Activated T-helper 2 cell treated with anti-CD3 and anti-CD28 coated beads, Interferon-gamma antibody, Interleukin-2, Interleukin-4, amounts not matched to agents 10 μg/mL and 5 μg/mL and 100 μg/mL, durations not matched to agents 14 hours and 24 hours and 36 hours (primary cell): ENCODE measurements at regions of chr7 and their contacts with region 1.

Region 1: GRCh38 chr7:24819916-24820689 is 62.8 kb upstream of the GSDME start:
- DNase-seq: peak; percentile 71
- H3K4me3 Mint-ChIP-seq: peak overlapping the region; percentile 69
- H3K27ac Mint-ChIP-seq: peak overlapping the region; percentile 97
- H3K4me1 Mint-ChIP-seq: peaks cover 43% of the 10 kb centered on the region
- H3K27me3 Mint-ChIP-seq: no peaks in the 10 kb centered on the region

Region 2: DNA sequence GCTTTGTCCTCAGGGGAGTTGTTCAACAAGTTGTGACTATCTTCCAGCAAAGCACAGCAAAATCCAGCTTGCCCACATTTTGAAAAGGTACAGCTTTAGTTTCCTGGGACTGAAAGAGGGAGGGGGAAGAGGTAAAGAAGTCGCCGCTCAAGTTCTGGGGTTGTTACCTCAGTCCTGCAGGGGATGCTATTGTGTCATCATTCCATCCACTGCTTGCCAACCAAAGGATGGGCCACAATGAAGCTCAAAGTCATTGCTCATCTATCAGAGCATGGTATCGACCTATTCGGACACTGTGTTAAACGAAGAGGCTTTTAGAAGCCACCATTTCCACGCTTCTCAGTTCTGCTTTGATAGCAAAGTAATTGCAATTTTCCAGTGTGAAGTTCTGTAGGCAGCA is 501.8 kb before region 1 on chr7:
- intact Hi-C with region 1: no loop called
- DNase-seq: no peak
- H3K4me3 Mint-ChIP-seq: no peak overlapping the region
- H3K27ac Mint-ChIP-seq: no peak overlapping the region
- H3K4me1 Mint-ChIP-seq: no peaks in the 10 kb centered on the region
- H3K27me3 Mint-ChIP-seq: peaks cover 19% of the 10 kb centered on the region

Region 3: DNA sequence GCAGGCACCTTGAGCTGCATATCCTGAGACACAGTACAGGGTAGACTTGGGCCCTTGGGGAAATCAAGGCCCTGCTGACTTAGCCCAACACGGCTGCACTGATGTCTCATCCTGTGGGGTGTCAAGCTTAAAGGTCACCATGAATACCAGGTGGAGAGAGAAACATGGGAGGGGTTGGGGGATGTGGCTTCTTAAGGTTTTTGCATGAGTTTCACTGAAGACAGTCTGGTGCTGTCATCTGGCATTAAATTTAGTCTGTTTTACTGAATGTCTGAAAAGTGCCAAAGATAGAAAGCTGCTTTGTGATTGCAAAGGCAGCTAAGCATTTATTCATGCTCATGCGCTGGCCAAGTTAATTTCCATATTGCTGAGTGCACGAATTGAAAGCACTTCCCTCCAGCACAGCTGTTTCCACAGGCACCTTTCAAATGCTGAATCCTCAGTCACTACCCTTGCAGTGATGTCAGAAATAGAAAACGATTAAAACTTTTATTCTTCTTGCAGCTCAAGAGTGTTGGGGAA is 57.7 kb after region 1 on chr7:
- intact Hi-C with region 1: loop called (anchors 1 kb)
- DNase-seq: peak; percentile 16
- H3K4me3 Mint-ChIP-seq: peak overlapping the region; percentile 49
- H3K27ac Mint-ChIP-seq: peak overlapping the region; percentile 69
- H3K4me1 Mint-ChIP-seq: peaks cover 56% of the 10 kb centered on the region
- H3K27me3 Mint-ChIP-seq: no peaks in the 10 kb centered on the region

Region 4: GRCh38 chr7:24965831-24966709 is 146.0 kb after region 1 on chr7:
- intact Hi-C with region 1: loop called (anchors 1 kb)
- DNase-seq: peak; percentile 60
- H3K4me3 Mint-ChIP-seq: peak overlapping the region; percentile 31
- H3K27ac Mint-ChIP-seq: peak overlapping the region; percentile 80
- H3K4me1 Mint-ChIP-seq: peaks cover 79% of the 10 kb centered on the region
- H3K27me3 Mint-ChIP-seq: no peaks in the 10 kb centered on the region

Region 5: GRCh38 chr7:25028370-25029021 is 208.4 kb after region 1 on chr7:
- intact Hi-C with region 1: loop called (anchors 1 kb)
- DNase-seq: peak; percentile 32
- H3K4me3 Mint-ChIP-seq: peak overlapping the region; percentile 32
- H3K27ac Mint-ChIP-seq: peak overlapping the region; percentile 82
- H3K4me1 Mint-ChIP-seq: peaks cover 51% of the 10 kb centered on the region
- H3K27me3 Mint-ChIP-seq: peaks cover 17% of the 10 kb centered on the region

Region 6: DNA sequence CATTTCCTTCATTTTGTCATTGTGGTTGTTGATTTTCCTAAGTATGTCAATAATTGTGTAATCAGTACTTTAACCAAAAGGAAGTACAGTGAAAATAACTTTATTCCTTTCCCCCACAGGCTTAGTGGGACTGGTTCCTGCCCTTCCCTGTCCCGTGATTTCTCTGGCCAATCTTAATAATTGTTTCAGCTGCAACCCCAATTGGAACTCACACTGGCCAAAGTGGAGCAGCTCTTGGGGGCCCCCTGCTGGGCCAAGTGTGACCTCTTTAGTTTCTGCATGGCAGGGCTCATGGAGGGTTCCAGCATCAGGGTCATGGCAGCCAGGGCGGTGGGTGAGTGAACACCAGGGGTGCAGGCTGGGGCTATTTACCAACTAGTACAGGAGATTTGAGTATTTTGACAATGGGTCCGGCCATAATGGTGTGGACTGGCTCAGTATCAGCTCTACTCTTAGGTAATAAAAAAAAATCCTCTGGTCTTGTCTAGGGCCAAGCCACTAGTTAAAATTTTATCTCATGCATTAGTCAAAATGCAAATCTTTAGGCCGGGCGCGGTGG is 273.2 kb after region 1 on chr7:
- intact Hi-C with region 1: loop called (anchors 1 kb)
- DNase-seq: peak; percentile 66
- H3K4me3 Mint-ChIP-seq: no peak overlapping the region
- H3K27ac Mint-ChIP-seq: no peak overlapping the region
- H3K4me1 Mint-ChIP-seq: peaks cover 16% of the 10 kb centered on the region
- H3K27me3 Mint-ChIP-seq: peaks cover 9% of the 10 kb centered on the region